Caco-2 (cell line): ENCODE measurements at regions of chr3 and their contacts with region 1.

Region 1: GRCh38 chr3:112043603-112044201 is 9.2 kb downstream of the TMPRSS7 start:
- DNase-seq: peak; percentile 66 to 71
- H3K4me3 ChIP-seq: no peak overlapping the region
- H3K4me3 Mint-ChIP-seq: no peak overlapping the region
- H3K27ac Mint-ChIP-seq: no peak overlapping the region
- H3K4me1 ChIP-seq: peaks cover 9% of the 10 kb centered on the region; the same call in 1 of the 2 replicates
- H3K4me1 Mint-ChIP-seq: peaks cover 6% of the 10 kb centered on the region
- H3K27me3 ChIP-seq: no peaks in the 10 kb centered on the region
- H3K27me3 Mint-ChIP-seq: no peaks in the 10 kb centered on the region
- CTCF ChIP-seq: peak; percentile 82 to 88

Region 2: DNA sequence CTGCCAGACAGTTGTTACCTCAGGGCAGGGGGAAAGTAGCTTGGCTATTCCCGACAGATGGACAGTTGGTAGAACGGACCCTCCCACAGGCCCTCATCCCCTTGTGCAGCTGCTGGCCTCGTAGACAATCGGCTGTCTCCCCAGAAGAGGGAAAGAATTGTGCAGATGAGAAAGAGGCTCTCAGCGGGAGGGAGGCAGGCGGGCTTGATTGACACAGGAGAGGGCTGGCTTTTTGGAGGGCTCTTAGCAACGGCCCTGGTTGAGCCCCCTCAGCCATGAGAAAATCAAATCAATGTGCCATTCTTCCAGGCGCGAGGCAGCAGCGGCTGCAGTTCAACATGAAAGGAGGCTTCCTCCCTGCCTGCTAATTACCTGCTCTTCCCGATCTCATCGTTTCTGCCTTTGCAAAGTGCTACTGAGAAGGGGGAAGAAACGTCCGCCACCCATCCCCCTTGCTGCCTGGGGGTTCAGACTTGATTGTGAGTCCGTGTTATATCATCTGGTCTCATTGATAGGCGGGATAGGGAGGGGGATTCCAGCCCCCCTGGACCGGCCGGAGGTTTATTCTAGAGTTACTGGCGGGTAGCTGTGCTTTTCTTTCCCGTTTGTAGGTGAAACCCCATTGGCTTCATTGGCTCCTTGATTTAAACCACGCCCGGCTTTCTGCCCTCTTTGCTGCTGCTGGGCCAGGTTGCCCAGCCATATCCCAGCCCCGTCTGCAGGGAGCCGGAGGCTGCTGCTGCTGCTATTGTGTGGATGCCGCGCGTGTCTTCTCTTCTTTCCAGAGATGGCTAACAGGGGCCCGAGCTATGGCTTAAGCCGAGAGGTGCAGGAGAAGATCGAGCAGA is 44.8 kb before region 1 on chr3 and contains the start of gene TAGLN3:
- CTCF ChIA-PET with region 1: no interaction called
- POLR2A ChIA-PET with region 1: no interaction called
- intact Hi-C with region 1: no loop called
- DNase-seq: no peak
- H3K4me3 ChIP-seq: peak within 1 kb of the TSS; percentile 20
- H3K4me3 Mint-ChIP-seq: peak within 1 kb of the TSS; percentile 60
- H3K27ac Mint-ChIP-seq: no peak within 1 kb of the TSS
- H3K4me1 ChIP-seq: no peaks in the 10 kb centered on the region
- H3K4me1 Mint-ChIP-seq: peaks cover 18% of the 10 kb centered on the region
- H3K27me3 ChIP-seq: no peaks in the 10 kb centered on the region
- H3K27me3 Mint-ChIP-seq: no peaks in the 10 kb centered on the region
- CTCF ChIP-seq: no peak
- total RNA-seq, gene TAGLN3: not detected in 2 replicates

Region 3: GRCh38 chr3:112086076-112086854 is 42.6 kb after region 1 on chr3 and contains the start of gene C3orf52:
- CTCF ChIA-PET with region 1: no interaction called
- POLR2A ChIA-PET with region 1: no interaction called
- intact Hi-C with region 1: loop called (anchors 1 kb)
- DNase-seq: peak; percentile 92 to 95
- H3K4me3 ChIP-seq: peak within 1 kb of the TSS; percentile 74
- H3K4me3 Mint-ChIP-seq: peak within 1 kb of the TSS; percentile 73
- H3K27ac Mint-ChIP-seq: peak within 1 kb of the TSS; percentile 94
- H3K4me1 ChIP-seq: peaks cover 66% of the 10 kb centered on the region
- H3K4me1 Mint-ChIP-seq: peaks cover 56% of the 10 kb centered on the region
- H3K27me3 ChIP-seq: no peaks in the 10 kb centered on the region
- H3K27me3 Mint-ChIP-seq: no peaks in the 10 kb centered on the region
- CTCF ChIP-seq: peak; percentile 21 to 34
- total RNA-seq, gene C3orf52: 52.4 and 64.5 TPM in 2 replicates